Right lobe of liver (tissue), 6 donors: ENCODE measurements at regions of chr6 and their contacts with region 1.

Region 1: DNA sequence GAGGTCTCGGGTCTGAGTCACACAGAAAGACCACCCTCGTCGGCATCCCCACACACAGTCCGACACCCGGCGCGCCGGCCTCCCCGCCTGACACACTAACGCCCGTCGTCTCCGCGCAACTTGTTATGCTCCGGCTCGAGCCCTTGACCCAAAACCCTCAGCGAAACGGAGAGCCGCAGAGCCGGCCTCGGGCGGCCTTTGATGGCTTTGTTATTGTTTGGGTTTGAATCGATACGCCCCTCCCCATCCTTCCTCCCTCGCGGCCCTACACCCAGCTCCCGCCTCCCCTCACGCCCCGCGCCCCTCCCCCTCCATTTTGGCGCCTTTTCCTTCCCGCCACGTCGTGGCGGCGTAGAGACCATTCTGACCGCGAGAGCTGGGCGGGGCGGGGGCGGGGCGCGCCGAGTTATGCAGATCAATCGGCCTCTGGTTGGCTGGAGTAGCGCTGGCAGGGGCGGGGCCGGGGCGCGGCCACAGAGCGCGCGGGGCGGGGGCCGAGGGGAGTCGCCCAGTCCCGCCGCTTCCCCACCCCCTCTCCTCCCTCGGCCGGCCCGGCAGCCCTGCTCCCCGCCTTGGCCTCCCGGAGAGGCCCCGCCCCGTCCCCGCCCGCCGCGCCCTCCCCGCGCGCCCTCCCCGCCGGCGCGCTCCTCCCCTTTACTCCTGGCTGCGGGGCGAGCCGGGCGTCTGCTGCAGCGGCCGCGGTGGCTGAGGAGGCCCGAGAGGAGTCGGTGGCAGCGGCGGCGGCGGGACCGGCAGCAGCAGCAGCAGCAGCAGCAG is at the start of gene PIM1:
- DNase-seq: peak; percentile 100
- ATAC-seq: peak; percentile 75 to 94 (median 84)
- H3K4me3 ChIP-seq: peak within 1 kb of the TSS; percentile 79 to 92 (median 89)
- H3K27ac ChIP-seq: peak within 1 kb of the TSS; percentile 84 to 96 (median 90)
- H3K4me1 ChIP-seq: peaks cover 0 to 26% (median 10%) of the 10 kb centered on the region in 4 donors
- H3K27me3 ChIP-seq: no peaks in the 10 kb centered on the region
- CTCF ChIP-seq: peak in 1 of 4 donors; percentile 7
- POLR2A ChIP-seq: peak; percentile 97
- total RNA-seq, gene PIM1: 5.1 to 45.2 (median 13.0) TPM

Region 2: DNA sequence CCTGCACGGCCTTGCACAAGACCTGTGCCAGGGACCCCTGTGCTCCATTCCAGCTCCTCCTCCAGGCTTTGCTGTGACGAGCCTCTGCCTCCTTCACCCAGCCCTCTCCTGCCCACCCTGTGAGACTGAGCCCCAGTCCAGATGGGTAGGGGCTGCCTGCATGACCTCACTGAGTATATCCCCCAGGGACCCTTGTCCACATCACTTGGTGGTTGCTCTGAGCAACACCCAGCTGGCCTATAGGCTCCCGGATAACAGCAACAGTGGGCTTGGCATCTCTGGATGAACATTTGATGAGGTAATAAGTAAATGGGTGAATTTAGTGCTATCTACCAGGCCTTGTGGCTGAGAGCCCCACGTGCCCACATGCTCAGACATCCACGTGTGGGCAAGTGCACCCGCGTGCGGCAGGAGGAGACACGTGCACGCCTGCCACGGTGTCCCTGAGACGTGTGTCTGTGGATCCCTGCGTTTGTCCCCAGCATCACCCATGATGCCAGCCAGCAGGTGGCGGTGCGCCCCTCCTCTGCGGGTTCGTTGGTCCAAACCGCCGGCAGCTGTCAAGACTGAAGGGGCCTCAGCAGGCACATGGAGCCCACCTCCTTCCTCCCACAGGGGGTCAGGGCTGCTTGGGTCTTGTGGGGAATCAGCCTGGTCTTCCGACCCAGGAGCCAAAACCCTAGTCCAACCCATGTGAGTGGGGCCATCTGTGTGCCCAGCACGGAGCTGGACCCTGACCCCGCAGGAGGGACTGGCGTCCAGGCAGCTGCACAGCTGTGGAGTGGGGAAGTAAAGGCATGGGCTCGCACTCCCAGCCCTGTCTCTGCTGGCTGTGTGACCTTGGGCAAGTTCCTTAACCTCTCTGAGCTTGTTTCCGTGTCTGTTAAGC is 118.3 kb before region 1 on chr6:
- intact Hi-C with region 1: loop called (anchors 5 kb)
- DNase-seq: peak; percentile 92 to 94 (median 92)
- ATAC-seq: peak; percentile 87 to 90 (median 88)
- H3K4me3 ChIP-seq: no peak overlapping the region
- H3K27ac ChIP-seq: peak overlapping the region in 2 of 3 donors; percentile 33 to 44
- H3K4me1 ChIP-seq: peaks cover 0 to 21% (median 5%) of the 10 kb centered on the region in 4 donors
- H3K27me3 ChIP-seq: no peaks in the 10 kb centered on the region
- CTCF ChIP-seq: peak; percentile 92 to 95 (median 94)
- POLR2A ChIP-seq: no peak

Region 3: GRCh38 chr6:37059344-37060206 is 110.1 kb before region 1 on chr6:
- intact Hi-C with region 1: loop called (anchors 5 kb)
- DNase-seq: peak; percentile 70 to 71 (median 70)
- ATAC-seq: peak; percentile 74 to 84 (median 80)
- H3K4me3 ChIP-seq: no peak overlapping the region
- H3K27ac ChIP-seq: peak overlapping the region; percentile 59 to 87 (median 66)
- H3K4me1 ChIP-seq: peaks cover 0 to 34% (median 14%) of the 10 kb centered on the region in 4 donors
- H3K27me3 ChIP-seq: no peaks in the 10 kb centered on the region
- CTCF ChIP-seq: peak; percentile 38 to 55 (median 46)
- POLR2A ChIP-seq: peak; percentile 34

Region 4: GRCh38 chr6:37069639-37070038 is 100.0 kb before region 1 on chr6:
- intact Hi-C with region 1: no loop called
- DNase-seq: no peak
- ATAC-seq: no peak
- H3K4me3 ChIP-seq: no peak overlapping the region
- H3K27ac ChIP-seq: no peak overlapping the region
- H3K4me1 ChIP-seq: peaks cover 0 to 31% (median 4%) of the 10 kb centered on the region in 4 donors
- H3K27me3 ChIP-seq: no peaks in the 10 kb centered on the region
- CTCF ChIP-seq: no peak
- POLR2A ChIP-seq: no peak

Region 5: GRCh38 chr6:37303932-37304363 is 134.3 kb after region 1 on chr6:
- intact Hi-C with region 1: no loop called
- DNase-seq: no peak
- ATAC-seq: peak; percentile 67 to 79 (median 74)
- H3K4me3 ChIP-seq: no peak overlapping the region
- H3K27ac ChIP-seq: no peak overlapping the region
- H3K4me1 ChIP-seq: no peaks in the 10 kb centered on the region
- H3K27me3 ChIP-seq: no peaks in the 10 kb centered on the region
- CTCF ChIP-seq: peak; percentile 40 to 57 (median 44)
- POLR2A ChIP-seq: no peak